ENCODE measurements at regions of chr5 and their contacts with region 1.

Region 1: GRCh38 chr5:65721720-65722574 is at the starts of genes NLN and SGTB:
- DNase-seq: peak; percentile 90
- H3K4me3 ChIP-seq: peak within 1 kb of the TSS; percentile 84 to 98 (median 94)
- H3K27ac ChIP-seq: peak within 1 kb of the TSS; percentile 69 to 87 (median 80)
- H3K4me1 ChIP-seq: peaks cover 0 to 25% (median 4%) of the 10 kb centered on the region in 4 donors
- H3K27me3 ChIP-seq: no peaks in the 10 kb centered on the region
- CTCF ChIP-seq: no peak
- EP300 ChIP-seq: no peak
- POLR2A ChIP-seq: no peak
- total RNA-seq, gene NLN: 4.8 to 8.9 (median 7.0) TPM
- total RNA-seq, gene SGTB: 10.2 to 13.9 (median 11.6) TPM

Region 2: GRCh38 chr5:65693121-65693520 is 28.8 kb before region 1 on chr5:
- intact Hi-C with region 1: no loop called
- DNase-seq: no peak
- H3K4me3 ChIP-seq: no peak overlapping the region
- H3K27ac ChIP-seq: no peak overlapping the region
- H3K4me1 ChIP-seq: peaks cover 0 to 10% (median 5%) of the 10 kb centered on the region in 4 donors
- H3K27me3 ChIP-seq: no peaks in the 10 kb centered on the region
- CTCF ChIP-seq: no peak
- EP300 ChIP-seq: no peak
- POLR2A ChIP-seq: no peak

Region 3: DNA sequence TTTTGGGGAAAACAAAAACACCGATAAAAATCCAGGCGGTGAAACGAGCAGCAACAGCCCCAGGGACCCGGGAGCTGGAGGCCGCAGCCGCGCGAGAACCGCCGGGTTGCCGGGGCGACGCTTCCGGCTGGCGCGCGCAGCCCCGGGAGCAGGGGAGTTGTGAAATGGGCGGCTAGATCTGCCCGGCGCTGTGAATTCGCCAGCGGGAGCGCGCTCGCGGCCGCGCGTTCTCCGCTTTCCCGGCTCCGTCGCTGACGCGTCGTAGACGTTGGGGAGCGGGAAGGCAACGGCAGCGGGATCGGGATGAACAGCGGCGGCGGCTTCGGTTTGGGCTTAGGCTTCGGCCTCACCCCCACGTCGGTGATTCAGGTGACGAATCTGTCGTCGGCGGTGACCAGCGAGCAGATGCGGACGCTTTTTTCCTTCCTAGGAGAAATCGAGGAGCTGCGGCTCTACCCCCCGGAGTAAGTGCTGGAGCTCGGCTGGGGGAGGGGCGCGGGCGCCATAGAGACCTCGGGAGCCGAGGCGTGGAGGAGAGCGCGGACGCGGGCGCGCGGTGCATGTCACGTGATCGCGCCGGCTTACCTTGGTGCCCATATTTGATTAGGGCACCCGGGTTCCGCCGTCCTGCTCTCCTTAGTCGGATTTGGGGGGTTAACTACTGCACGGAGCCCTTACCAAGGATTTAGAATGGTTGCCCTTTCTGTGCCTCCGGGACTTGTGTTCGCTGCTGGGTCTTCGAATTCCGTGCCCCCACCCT is 422.3 kb after region 1 on chr5 and contains the start of gene SREK1:
- intact Hi-C with region 1: loop called (anchors 1 kb)
- DNase-seq: peak; percentile 96
- H3K4me3 ChIP-seq: peak within 1 kb of the TSS; percentile 83 to 90 (median 86)
- H3K27ac ChIP-seq: peak within 1 kb of the TSS; percentile 96 to 99 (median 99)
- H3K4me1 ChIP-seq: peaks cover 0 to 46% (median 28%) of the 10 kb centered on the region in 4 donors
- H3K27me3 ChIP-seq: no peaks in the 10 kb centered on the region
- CTCF ChIP-seq: no peak
- EP300 ChIP-seq: no peak
- POLR2A ChIP-seq: peak; percentile 71 to 75
- total RNA-seq, gene SREK1: 63.5 to 127 (median 85.6) TPM